ENCODE measurements at regions of chr5 and their contacts with region 1.

Region 1: GRCh38 chr5:133868946-133869518 is 99.4 kb downstream of the C5orf15 start:
- DNase-seq: peak; percentile 89
- ATAC-seq: peak; percentile 84
- H3K4me3 Mint-ChIP-seq: peak overlapping the region; percentile 9
- H3K27ac Mint-ChIP-seq: peak overlapping the region; percentile 36
- H3K4me1 Mint-ChIP-seq: peaks cover 13% of the 10 kb centered on the region
- H3K27me3 Mint-ChIP-seq: no peaks in the 10 kb centered on the region

Region 2: GRCh38 chr5:133423618-133424282 is 445.3 kb before region 1 on chr5:
- CTCF ChIA-PET with region 1: interaction called, 24 read pairs
- POLR2A ChIA-PET with region 1: no interaction called
- DNase-seq: peak; percentile 73
- ATAC-seq: peak; percentile 89
- H3K4me3 Mint-ChIP-seq: no peak overlapping the region
- H3K27ac Mint-ChIP-seq: no peak overlapping the region
- H3K4me1 Mint-ChIP-seq: peaks cover 9% of the 10 kb centered on the region
- H3K27me3 Mint-ChIP-seq: peaks cover 9% of the 10 kb centered on the region

Region 3: GRCh38 chr5:133754575-133755169 is 114.4 kb before region 1 on chr5:
- CTCF ChIA-PET with region 1: interaction called, 31 read pairs
- POLR2A ChIA-PET with region 1: no interaction called
- DNase-seq: peak; percentile 40
- ATAC-seq: peak; percentile 68
- H3K4me3 Mint-ChIP-seq: no peak overlapping the region
- H3K27ac Mint-ChIP-seq: no peak overlapping the region
- H3K4me1 Mint-ChIP-seq: no peaks in the 10 kb centered on the region
- H3K27me3 Mint-ChIP-seq: peaks cover 27% of the 10 kb centered on the region

Region 4: DNA sequence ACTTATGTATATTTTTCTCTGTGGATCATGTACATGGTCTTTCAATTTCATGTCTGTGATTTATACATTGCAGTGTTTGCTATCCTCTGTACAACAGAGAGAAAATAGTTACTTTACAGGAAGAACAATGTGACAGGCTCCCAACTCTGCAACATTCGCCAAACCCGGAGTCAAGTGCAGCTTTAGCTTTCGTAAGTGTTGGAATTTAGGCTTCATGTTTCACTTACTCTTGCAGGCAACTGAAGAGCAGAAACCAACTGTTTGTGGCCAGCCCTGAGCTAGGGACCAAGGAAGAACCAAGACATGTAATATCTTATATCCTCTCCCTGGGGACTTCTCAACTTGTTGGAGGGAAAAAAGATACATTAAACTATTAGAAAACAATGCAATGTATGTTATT is 48.5 kb before region 1 on chr5:
- CTCF ChIA-PET with region 1: interaction called, 10 read pairs
- POLR2A ChIA-PET with region 1: no interaction called
- DNase-seq: no peak
- ATAC-seq: no peak
- H3K4me3 Mint-ChIP-seq: no peak overlapping the region
- H3K27ac Mint-ChIP-seq: no peak overlapping the region
- H3K4me1 Mint-ChIP-seq: peaks cover 28% of the 10 kb centered on the region
- H3K27me3 Mint-ChIP-seq: peaks cover 20% of the 10 kb centered on the region

Region 5: DNA sequence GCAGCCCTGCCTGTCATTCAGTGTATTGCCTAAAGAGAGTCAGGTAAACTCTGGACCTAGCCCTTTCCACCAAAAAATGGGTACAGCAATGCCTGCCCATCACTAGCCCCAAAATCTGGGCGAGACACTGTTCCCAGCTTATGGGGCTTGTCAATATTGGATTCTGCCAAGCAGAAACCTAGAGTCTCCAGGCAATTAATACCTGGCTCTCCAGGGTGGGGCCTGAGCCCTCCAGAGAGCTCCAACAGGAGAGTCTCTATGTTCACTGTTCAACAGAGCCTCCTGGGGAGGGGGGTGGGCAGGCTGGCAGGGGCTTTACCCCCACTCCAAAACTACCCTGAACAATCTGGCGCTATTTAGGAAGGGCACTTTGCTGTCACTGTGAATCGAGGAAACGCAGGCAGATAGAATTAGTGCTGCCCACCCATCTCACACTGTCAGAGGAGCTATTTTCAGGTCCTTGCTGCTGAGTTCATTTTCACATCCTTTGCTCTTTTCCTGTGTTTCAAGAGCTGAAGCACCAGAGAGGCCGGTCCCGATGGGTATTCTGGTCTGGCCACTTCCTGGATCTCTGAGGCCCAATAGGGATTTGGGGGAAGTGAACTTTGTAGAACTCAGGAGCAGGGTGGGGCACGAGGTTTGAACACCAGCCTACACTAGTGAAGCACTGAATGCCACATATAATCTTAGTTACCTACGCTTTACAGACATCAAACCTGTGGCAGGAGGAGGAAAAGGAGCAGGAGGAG is 22.4 kb before region 1 on chr5:
- CTCF ChIA-PET with region 1: interaction called, 20 read pairs
- POLR2A ChIA-PET with region 1: no interaction called
- DNase-seq: no peak
- ATAC-seq: no peak
- H3K4me3 Mint-ChIP-seq: no peak overlapping the region
- H3K27ac Mint-ChIP-seq: peak overlapping the region; percentile 2
- H3K4me1 Mint-ChIP-seq: peaks cover 26% of the 10 kb centered on the region
- H3K27me3 Mint-ChIP-seq: peaks cover 5% of the 10 kb centered on the region

Region 6: DNA sequence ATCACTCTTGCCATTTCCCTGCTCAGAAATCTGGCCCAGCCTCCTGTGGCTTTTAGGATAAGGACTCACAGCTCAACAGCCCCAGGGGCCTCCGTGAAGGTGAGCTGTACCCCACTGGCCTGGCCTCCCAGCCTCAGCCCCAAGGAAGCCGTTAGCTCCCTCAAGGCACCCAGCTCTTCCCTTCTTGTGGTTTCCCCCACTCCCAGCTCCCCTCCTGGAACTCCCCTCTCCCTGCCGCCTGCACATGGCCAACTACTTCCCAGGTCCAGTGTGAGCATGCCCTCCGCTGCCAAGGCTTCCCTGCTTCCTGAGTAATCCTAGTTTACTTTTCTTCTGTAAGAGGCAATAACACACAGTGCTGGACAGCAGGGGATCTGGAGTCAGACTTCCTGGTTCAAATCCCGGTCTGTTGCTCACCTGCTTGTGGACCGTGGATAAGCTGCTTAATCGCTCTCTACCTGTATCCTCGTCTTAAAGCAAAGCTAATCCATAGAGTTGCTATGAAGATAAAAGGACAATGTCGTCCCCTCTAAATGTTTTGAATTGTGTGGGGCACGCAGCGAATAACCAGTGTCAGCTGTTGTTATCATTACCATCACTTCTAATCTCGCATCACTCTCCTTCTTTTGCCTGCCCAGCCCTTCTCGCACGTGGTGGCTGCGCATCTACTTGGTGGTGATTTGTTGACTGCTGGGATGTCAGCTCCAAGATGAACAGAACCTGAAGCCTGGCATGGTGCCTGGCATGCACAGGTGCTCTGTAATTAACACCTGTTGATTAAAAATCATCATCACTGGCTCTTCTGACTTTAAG is 12.8 kb after region 1 on chr5:
- CTCF ChIA-PET with region 1: interaction called, 32 read pairs
- POLR2A ChIA-PET with region 1: no interaction called
- DNase-seq: no peak
- ATAC-seq: no peak
- H3K4me3 Mint-ChIP-seq: no peak overlapping the region
- H3K27ac Mint-ChIP-seq: no peak overlapping the region
- H3K4me1 Mint-ChIP-seq: peaks cover 2% of the 10 kb centered on the region
- H3K27me3 Mint-ChIP-seq: peaks cover 3% of the 10 kb centered on the region

Region 7: DNA sequence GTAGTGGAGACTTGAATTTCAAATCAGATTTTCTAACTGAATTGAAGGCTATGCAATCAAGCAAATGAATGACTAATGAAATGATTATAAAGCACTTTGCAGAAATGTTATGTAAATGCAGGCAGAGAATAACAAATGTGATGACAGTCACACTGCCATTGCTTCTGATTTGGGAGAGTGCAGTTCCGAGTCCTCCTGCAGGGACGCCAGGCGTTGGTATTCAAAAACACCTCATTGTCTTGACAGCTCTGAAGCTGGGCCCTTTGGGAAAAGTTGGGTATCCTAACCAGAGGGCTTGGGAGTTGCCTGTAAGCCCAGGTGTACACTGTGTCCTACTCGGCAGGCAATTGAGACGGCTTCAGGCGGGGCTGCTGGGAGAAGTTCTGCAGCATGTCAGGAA is 41.5 kb after region 1 on chr5:
- CTCF ChIA-PET with region 1: no interaction called
- POLR2A ChIA-PET with region 1: no interaction called
- DNase-seq: no peak
- ATAC-seq: no peak
- H3K4me3 Mint-ChIP-seq: no peak overlapping the region
- H3K27ac Mint-ChIP-seq: no peak overlapping the region
- H3K4me1 Mint-ChIP-seq: no peaks in the 10 kb centered on the region
- H3K27me3 Mint-ChIP-seq: no peaks in the 10 kb centered on the region

Region 8: GRCh38 chr5:133957591-133957990 is 88.6 kb after region 1 on chr5:
- CTCF ChIA-PET with region 1: no interaction called
- POLR2A ChIA-PET with region 1: no interaction called
- DNase-seq: no peak
- ATAC-seq: no peak
- H3K4me3 Mint-ChIP-seq: no peak overlapping the region
- H3K27ac Mint-ChIP-seq: peak overlapping the region; percentile 67
- H3K4me1 Mint-ChIP-seq: peaks cover 25% of the 10 kb centered on the region
- H3K27me3 Mint-ChIP-seq: no peaks in the 10 kb centered on the region

Region 9: DNA sequence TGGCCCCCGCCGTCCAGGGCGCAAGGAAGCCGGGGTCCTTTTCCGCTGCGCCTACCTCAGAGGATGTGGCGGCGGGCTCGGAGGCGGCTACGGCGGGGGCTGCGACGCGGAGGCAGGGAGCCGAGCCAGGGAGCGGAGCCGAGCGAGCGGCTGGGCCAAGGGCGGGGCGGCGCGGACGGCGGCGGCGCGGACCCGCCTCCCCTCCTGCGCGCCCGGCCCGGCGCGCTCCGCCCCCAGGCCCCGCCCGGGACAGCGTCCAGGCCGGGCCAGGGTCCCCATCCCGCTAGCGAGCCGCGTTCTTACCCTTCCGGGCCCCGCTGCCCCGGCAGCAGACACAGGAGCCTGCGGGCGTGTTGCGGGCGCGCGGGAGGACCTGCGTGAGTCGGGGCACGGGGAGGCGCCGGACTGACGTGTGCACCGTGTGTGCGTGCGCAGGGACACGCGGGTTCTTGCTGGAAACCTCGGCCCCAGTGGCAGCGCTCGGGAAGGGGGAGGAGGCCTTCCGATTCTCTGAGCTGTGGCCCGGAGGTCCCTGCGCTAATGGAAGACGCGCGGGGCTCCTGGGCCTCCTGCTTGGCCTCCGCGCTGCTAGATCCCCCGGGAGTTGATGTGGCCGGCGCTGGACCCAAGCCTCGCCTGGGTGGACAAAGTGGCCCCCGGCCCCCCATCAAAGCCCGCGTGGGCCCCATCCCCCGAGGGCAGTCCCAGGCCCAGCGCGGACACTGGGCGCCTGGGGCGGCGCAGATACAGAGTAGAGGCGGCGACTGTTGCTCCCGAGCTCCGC is 135.8 kb after region 1 on chr5 and contains the start of gene VDAC1:
- CTCF ChIA-PET with region 1: no interaction called
- POLR2A ChIA-PET with region 1: no interaction called
- DNase-seq: peak; percentile 92
- ATAC-seq: peak; percentile 83
- H3K4me3 Mint-ChIP-seq: peak within 1 kb of the TSS; percentile 92
- H3K27ac Mint-ChIP-seq: peak within 1 kb of the TSS; percentile 98
- H3K4me1 Mint-ChIP-seq: peaks cover 46% of the 10 kb centered on the region
- H3K27me3 Mint-ChIP-seq: no peaks in the 10 kb centered on the region
- total RNA-seq, gene VDAC1: 250 to 259 TPM

Measured in activated CD8-positive, alpha-beta T cell treated with anti-CD3 and anti-CD28 coated beads, Interleukin-2, amount 10 ng/mL, durations not matched to agents 7 days and 5 days (primary cell).